Naive thymus-derived CD8-positive, alpha-beta T cell (primary cell): ENCODE measurements at regions of chr2 and their contacts with region 1.

Region 1: GRCh38 chr2:10302479-10303180 is at the start of gene HPCAL1:
- DNase-seq: peak; percentile 67 to 90 (median 84)
- ATAC-seq: peak; percentile 64 to 65
- H3K4me3 Mint-ChIP-seq: peak within 1 kb of the TSS; percentile 95 to 99 (median 97)
- H3K27ac Mint-ChIP-seq: peak within 1 kb of the TSS; percentile 84 to 96 (median 94)
- H3K4me1 Mint-ChIP-seq: peaks cover 45 to 72% (median 69%) of the 10 kb centered on the region in 4 donors
- H3K27me3 Mint-ChIP-seq: no peaks in the 10 kb centered on the region
- polyA plus RNA-seq, gene HPCAL1: 71.5 to 122 (median 98.2) TPM

Region 2: DNA sequence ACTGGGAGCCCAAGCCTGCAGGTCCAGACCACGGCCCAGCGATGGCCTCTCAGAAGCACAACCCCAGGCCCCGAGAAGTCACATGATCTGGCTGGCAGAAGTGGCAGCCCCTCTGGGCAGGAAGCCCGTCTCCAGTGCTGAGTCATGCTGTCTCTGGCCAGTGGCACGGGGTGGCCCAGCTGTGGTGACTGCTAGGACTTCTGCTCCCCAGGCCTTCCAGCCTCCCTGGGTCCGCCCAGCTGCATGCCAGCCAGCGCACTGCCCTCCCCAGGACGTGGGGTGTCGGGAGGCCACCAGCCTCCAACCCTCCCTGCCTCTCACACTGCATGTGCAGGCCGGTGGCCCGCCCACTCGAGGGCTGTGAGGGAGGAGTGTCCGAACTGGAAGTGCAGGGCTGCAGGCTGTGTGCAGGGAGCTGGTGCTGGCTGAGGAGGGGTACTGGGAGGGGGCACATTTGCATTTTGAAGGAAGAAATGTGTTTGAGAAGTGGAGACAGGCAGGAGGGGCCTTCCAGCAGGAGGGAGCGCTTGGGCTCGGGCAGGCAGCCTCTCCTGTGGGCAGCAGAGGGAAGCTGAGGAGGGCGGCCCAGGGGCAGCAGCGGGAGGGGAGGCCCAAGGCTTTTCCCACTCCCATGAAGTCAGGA is 17.0 kb before region 1 on chr2:
- POLR2A ChIA-PET with region 1: interaction called, 25 read pairs
- DNase-seq: peak in 1 of 10 donors; percentile 45
- ATAC-seq: no peak
- H3K4me3 Mint-ChIP-seq: no peak overlapping the region
- H3K27ac Mint-ChIP-seq: no peak overlapping the region
- H3K4me1 Mint-ChIP-seq: peaks cover 0 to 17% (median under 1%) of the 10 kb centered on the region in 4 donors
- H3K27me3 Mint-ChIP-seq: no peaks in the 10 kb centered on the region

Region 3: GRCh38 chr2:10331027-10331701 is 28.5 kb after region 1 on chr2:
- POLR2A ChIA-PET with region 1: interaction called, 325 read pairs
- DNase-seq: peak; percentile 56 to 78 (median 65)
- ATAC-seq: peak; percentile 44 to 57
- H3K4me3 Mint-ChIP-seq: peak overlapping the region; percentile 87 to 100 (median 92)
- H3K27ac Mint-ChIP-seq: peak overlapping the region; percentile 94 to 99 (median 98)
- H3K4me1 Mint-ChIP-seq: peaks cover 65 to 94% (median 85%) of the 10 kb centered on the region in 4 donors
- H3K27me3 Mint-ChIP-seq: no peaks in the 10 kb centered on the region

Region 4: DNA sequence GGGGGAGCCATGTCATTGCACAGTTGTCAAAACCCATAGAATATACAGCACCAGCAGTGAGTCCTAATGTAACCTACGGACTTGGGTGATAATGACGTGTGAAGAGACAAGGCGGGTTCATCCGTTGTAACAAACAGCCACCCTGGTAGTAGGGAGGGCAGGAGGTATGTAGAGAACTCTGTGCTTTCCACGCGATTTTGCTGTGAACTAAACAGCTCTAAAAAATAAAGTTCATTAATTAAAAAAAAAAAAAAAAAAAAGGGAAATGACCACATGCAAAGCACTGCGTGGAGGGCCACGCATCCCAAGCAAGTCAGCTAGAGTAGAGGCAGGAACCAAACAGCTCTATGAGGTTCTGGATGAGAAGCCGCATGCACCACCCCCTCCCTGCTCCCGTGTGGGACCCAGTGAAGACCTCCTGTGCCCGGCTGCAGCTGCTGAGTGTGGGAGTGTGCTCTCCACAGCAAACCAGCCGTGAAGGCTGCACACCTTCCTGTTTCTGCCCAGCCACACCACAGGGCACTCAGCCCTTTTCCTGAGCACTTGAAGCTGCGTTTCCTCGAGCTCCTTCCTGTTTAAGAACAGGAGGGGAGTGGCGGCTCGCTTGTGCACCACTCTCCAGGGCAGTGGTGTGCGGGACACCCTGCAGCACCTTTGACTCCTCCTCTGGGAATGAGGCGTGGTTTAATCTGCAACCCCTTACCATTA is 79.9 kb after region 1 on chr2:
- POLR2A ChIA-PET with region 1: interaction called, 85 read pairs
- DNase-seq: peak; percentile 23 to 82 (median 62)
- ATAC-seq: peak; percentile 86 to 95
- H3K4me3 Mint-ChIP-seq: peak overlapping the region; percentile 45 to 86 (median 74)
- H3K27ac Mint-ChIP-seq: peak overlapping the region; percentile 81 to 96 (median 91)
- H3K4me1 Mint-ChIP-seq: peaks cover 60 to 97% (median 96%) of the 10 kb centered on the region in 4 donors
- H3K27me3 Mint-ChIP-seq: no peaks in the 10 kb centered on the region

Region 5: DNA sequence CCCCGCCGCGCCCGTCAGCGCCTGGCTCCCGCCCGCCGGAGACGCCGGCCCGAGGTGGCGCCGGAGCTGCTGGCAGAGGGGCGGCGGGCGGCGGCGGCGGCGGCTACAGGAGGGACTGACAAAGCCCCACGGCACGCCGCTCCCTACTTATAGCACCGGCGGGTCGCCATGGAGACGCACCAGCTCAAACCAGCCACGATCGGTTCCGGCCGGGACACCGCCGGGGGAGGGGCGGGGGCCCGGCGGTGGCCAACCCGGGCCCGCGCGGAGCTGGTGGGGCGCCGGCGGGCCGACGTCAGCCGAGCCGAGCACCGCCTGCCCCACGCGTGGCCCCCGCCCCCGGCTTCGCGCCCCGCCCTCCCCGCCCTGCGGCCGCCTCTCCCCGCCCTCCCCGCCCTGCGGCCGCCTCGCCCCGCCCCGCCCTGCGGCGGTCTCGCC is 145.6 kb after region 1 on chr2 and contains the start of gene ODC1:
- POLR2A ChIA-PET with region 1: interaction called, 35 read pairs
- DNase-seq: peak; percentile 97 to 99 (median 98)
- ATAC-seq: peak; percentile 83 to 84
- H3K4me3 Mint-ChIP-seq: peak within 1 kb of the TSS; percentile 72 to 95 (median 86)
- H3K27ac Mint-ChIP-seq: peak within 1 kb of the TSS; percentile 82 to 95 (median 90)
- H3K4me1 Mint-ChIP-seq: peaks cover 19 to 43% (median 35%) of the 10 kb centered on the region in 4 donors
- H3K27me3 Mint-ChIP-seq: no peaks in the 10 kb centered on the region
- polyA plus RNA-seq, gene ODC1: 44.5 to 70.7 (median 60.9) TPM